Activated CD4-positive, alpha-beta T cell treated with anti-CD3 and anti-CD28 coated beads for 36 hours (primary cell): ENCODE measurements at regions of chr11 and their contacts with region 1.

Region 1: GRCh38 chr11:127733552-127733951 is 733.0 kb upstream of the KIRREL3 start:
- DNase-seq: no peak
- ATAC-seq: no peak
- H3K4me3 Mint-ChIP-seq: no peak overlapping the region
- H3K27ac Mint-ChIP-seq: no peak overlapping the region
- H3K4me1 Mint-ChIP-seq: no peaks in the 10 kb centered on the region
- H3K27me3 Mint-ChIP-seq: peaks cover 5% of the 10 kb centered on the region

Region 2: DNA sequence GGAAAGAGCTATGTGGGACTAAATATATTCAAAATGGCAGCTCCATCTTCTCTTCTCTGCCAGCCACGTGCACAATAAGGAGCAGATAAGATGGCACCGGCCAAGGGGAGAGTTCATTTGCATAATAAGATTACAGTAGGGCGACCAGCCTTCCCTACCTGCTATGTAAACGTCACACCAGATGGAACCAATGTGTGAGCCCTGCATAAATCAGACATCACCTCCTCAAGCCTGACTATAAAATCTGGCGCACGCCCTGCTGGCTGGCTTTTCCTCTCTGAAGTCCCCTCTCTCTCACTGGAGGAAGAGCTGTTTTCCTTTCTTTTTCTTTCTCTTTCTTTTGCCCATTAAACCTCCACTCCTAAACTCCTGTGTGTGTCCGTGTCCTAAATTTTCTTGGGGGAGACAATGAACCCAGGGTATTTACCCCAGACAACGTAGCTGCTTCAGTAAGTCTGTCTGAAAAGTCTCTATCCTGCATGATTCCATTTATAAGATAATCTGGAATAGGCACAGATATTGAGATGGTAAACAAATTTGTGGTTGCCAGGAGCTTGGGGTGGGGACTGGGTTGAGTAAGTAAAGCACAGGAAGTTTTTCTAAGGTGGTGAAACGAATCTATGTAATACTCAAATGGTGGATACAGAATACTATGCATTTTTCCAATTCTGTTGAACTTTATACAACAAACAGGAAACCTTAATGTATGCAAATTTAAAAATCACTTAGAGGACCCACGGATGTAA is 63.0 kb before region 1 on chr11:
- CTCF ChIA-PET with region 1: no interaction called
- POLR2A ChIA-PET with region 1: no interaction called
- intact Hi-C with region 1: no loop called
- DNase-seq: no peak
- ATAC-seq: no peak
- H3K4me3 Mint-ChIP-seq: no peak overlapping the region
- H3K27ac Mint-ChIP-seq: no peak overlapping the region
- H3K4me1 Mint-ChIP-seq: no peaks in the 10 kb centered on the region
- H3K27me3 Mint-ChIP-seq: peaks cover 4% of the 10 kb centered on the region

Region 3: GRCh38 chr11:127789927-127790326 is 56.4 kb after region 1 on chr11:
- CTCF ChIA-PET with region 1: no interaction called
- POLR2A ChIA-PET with region 1: interaction called, 10 read pairs
- intact Hi-C with region 1: no loop called
- DNase-seq: peak; percentile 22
- ATAC-seq: no peak
- H3K4me3 Mint-ChIP-seq: no peak overlapping the region
- H3K27ac Mint-ChIP-seq: no peak overlapping the region
- H3K4me1 Mint-ChIP-seq: no peaks in the 10 kb centered on the region
- H3K27me3 Mint-ChIP-seq: peaks cover 1% of the 10 kb centered on the region

Region 4: GRCh38 chr11:128318856-128319474 is 585.4 kb after region 1 on chr11:
- CTCF ChIA-PET with region 1: no interaction called
- POLR2A ChIA-PET with region 1: no interaction called
- intact Hi-C with region 1: no loop called
- DNase-seq: peak; percentile 90
- ATAC-seq: peak; percentile 81
- H3K4me3 Mint-ChIP-seq: peak overlapping the region; percentile 9
- H3K27ac Mint-ChIP-seq: peak overlapping the region; percentile 93
- H3K4me1 Mint-ChIP-seq: peaks cover 84% of the 10 kb centered on the region
- H3K27me3 Mint-ChIP-seq: no peaks in the 10 kb centered on the region